SK-N-SH (cell line): ENCODE measurements at regions of chr5 and their contacts with region 1.

Region 1: GRCh38 chr5:50962934-50963872 is 296.8 kb downstream of the PARP8 start:
- DNase-seq: peak; percentile 87
- H3K4me3 ChIP-seq: peak overlapping the region; percentile 57 to 81
- H3K27ac ChIP-seq: peak overlapping the region in 1 of 2 experiments; percentile 84; a peak in 2 of 4 replicates
- H3K4me1 ChIP-seq: peaks cover 0 to 30% of the 10 kb centered on the region in 2 experiments; a peak in 2 of 4 replicates
- H3K27me3 ChIP-seq: peaks cover 38% of the 10 kb centered on the region
- CTCF ChIP-seq: peak; percentile 99
- EP300 ChIP-seq: no peak
- RAD21 ChIP-seq: peak; percentile 100

Region 2: GRCh38 chr5:50984640-50985039 is 21.4 kb after region 1 on chr5:
- CTCF ChIA-PET with region 1: no interaction called
- POLR2A ChIA-PET with region 1: no interaction called
- DNase-seq: no peak
- H3K4me3 ChIP-seq: no peak overlapping the region
- H3K27ac ChIP-seq: no peak overlapping the region
- H3K4me1 ChIP-seq: no peaks in the 10 kb centered on the region; a peak in 2 of 4 replicates
- H3K27me3 ChIP-seq: no peaks in the 10 kb centered on the region
- CTCF ChIP-seq: no peak
- EP300 ChIP-seq: no peak
- RAD21 ChIP-seq: no peak

Region 3: GRCh38 chr5:51347704-51348103 is 384.5 kb after region 1 on chr5:
- CTCF ChIA-PET with region 1: interaction called, 12 read pairs
- POLR2A ChIA-PET with region 1: no interaction called
- DNase-seq: no peak
- H3K4me3 ChIP-seq: no peak overlapping the region
- H3K27ac ChIP-seq: no peak overlapping the region
- H3K4me1 ChIP-seq: no peaks in the 10 kb centered on the region
- H3K27me3 ChIP-seq: no peaks in the 10 kb centered on the region
- CTCF ChIP-seq: peak; percentile 36; the same call in 1 of the 2 replicates
- EP300 ChIP-seq: no peak
- RAD21 ChIP-seq: peak; percentile 47; the same call in 1 of the 2 replicates

Region 4: DNA sequence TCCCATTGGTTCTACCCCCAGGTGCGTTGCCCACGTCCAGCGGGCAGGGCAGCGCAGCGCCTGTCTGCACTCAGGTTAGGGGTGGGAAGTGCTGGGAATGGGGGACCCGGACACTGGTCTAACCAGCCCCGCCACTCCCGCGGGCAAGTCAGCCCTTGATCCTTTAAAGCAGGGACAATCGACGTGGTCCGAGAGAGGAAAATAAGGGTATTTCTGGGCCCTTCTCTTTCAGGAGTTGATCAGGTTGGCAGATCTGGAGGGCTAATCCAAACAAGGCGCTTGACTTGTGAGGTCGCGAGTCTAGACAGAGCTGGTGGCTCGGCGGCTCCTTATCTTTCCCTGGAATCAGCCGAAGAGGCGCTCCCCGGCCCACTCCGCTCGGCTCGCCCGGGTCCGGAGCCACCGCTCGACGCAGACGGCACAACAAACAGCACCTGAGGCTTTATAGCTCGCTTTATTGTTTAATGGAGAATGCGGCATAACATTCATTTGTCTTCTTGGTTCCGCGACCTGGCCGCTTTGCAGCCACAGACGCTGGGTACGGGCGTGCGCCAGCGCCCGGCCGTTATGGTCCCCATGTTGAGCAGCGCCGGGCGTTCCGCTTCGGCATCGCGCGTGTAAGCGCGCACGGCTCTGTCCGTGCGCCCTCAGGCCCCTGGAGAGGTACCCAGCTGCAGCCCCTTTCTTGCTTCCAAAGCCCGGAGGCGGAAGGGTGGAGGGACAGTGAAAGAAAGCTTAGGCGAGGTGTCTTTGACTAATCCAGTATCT is 435.9 kb after region 1 on chr5:
- CTCF ChIA-PET with region 1: interaction called, 17 read pairs
- POLR2A ChIA-PET with region 1: interaction called, 6 read pairs
- DNase-seq: peak; percentile 79
- H3K4me3 ChIP-seq: peak overlapping the region; percentile 38 to 50
- H3K27ac ChIP-seq: peak overlapping the region; percentile 85 to 100
- H3K4me1 ChIP-seq: peaks cover 5 to 56% of the 10 kb centered on the region in 2 experiments; a peak in 3 of 4 replicates
- H3K27me3 ChIP-seq: no peaks in the 10 kb centered on the region
- CTCF ChIP-seq: no peak
- EP300 ChIP-seq: no peak
- RAD21 ChIP-seq: 0 out of 2 replicates have a peak, but pooled peaks have one; percentile 13

Region 5: GRCh38 chr5:51960617-51961115 is 997.5 kb after region 1 on chr5:
- CTCF ChIA-PET with region 1: interaction called, 17 read pairs
- POLR2A ChIA-PET with region 1: interaction called, 4 read pairs
- DNase-seq: peak; percentile 12
- H3K4me3 ChIP-seq: no peak overlapping the region
- H3K27ac ChIP-seq: peak overlapping the region in 1 of 2 experiments; percentile 99; a peak in 2 of 4 replicates
- H3K4me1 ChIP-seq: peaks cover 0 to 14% of the 10 kb centered on the region in 2 experiments; a peak in 3 of 4 replicates
- H3K27me3 ChIP-seq: no peaks in the 10 kb centered on the region
- CTCF ChIP-seq: peak; percentile 86
- EP300 ChIP-seq: peak; percentile 36 to 90; a peak in 3 of 4 replicates
- RAD21 ChIP-seq: peak; percentile 93

Region 6: DNA sequence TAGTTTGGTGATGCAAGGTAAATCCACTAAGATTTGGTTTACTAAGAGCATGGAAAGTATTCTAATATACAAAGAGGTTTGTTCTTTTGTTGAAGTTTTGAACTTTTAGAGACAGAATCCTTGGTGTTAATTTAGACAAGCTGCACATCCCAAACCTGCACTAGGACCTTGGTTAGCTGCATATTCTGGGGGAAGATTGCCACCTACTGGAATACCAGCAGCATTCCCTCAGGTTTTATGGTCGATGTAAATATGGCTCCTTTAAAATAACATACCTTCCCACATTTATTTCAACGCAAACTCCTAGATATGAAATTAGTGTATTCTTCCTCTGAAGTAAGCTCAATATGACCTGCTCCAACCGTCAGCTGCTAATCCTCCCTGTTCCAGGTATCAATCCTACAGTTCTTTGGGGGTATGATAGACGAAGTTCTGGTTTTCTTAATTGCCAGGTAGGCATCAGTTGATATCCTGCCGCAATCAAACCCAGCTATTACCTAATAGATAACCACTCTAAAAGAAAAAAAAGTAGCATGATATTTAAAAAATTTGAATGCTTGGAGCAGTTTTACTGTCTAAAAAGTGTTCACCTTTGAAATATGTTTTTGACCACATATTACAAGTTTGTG is 1044.1 kb after region 1 on chr5:
- CTCF ChIA-PET with region 1: interaction called, 33 read pairs
- POLR2A ChIA-PET with region 1: interaction called, 5 read pairs
- DNase-seq: peak; percentile 44
- H3K4me3 ChIP-seq: peak overlapping the region in 1 of 2 experiments; percentile 21; a peak in 1 of 4 replicates
- H3K27ac ChIP-seq: peak overlapping the region in 1 of 2 experiments; percentile 94; a peak in 2 of 4 replicates
- H3K4me1 ChIP-seq: peaks cover 0 to 3% of the 10 kb centered on the region in 2 experiments; a peak in 1 of 4 replicates
- H3K27me3 ChIP-seq: no peaks in the 10 kb centered on the region
- CTCF ChIP-seq: peak; percentile 89
- EP300 ChIP-seq: 0 out of 4 replicates have a peak, but pooled peaks of 1 of the 2 experiments have one; percentile 23
- RAD21 ChIP-seq: peak; percentile 98

Region 7: GRCh38 chr5:52657247-52657645 is 1694.0 kb after region 1 on chr5:
- CTCF ChIA-PET with region 1: interaction called, 16 read pairs
- POLR2A ChIA-PET with region 1: interaction called, 3 read pairs
- DNase-seq: peak; percentile 12
- H3K4me3 ChIP-seq: peak overlapping the region in 1 of 2 experiments; percentile 34; a peak in 1 of 4 replicates
- H3K27ac ChIP-seq: peak overlapping the region in 1 of 2 experiments; percentile 97; a peak in 2 of 4 replicates
- H3K4me1 ChIP-seq: peaks cover 7 to 19% of the 10 kb centered on the region in 2 experiments; a peak in 3 of 4 replicates
- H3K27me3 ChIP-seq: no peaks in the 10 kb centered on the region
- CTCF ChIP-seq: peak; percentile 69
- EP300 ChIP-seq: peak in 1 of 2 experiments; percentile 52; a peak in 1 of 4 replicates
- RAD21 ChIP-seq: peak; percentile 83